Activated T-helper 1 cell treated with anti-CD3 and anti-CD28 coated beads, Interleukin-12 subunit alpha, Interleukin-12 subunit beta, Interleukin-2, Interleukin-4 antibody, amounts not matched to agents 30 ng/mL and 10 ng/mL and 1 ng/mL, durations not matched to agents 14 hours and 24 hours and 36 hours (primary cell): ENCODE measurements at regions of chr3 and their contacts with region 1.

Region 1: GRCh38 chr3:113223475-113224281 is 12.3 kb downstream of the BOC start:
- DNase-seq: peak; percentile 32
- H3K4me3 Mint-ChIP-seq: peak overlapping the region; percentile 52
- H3K27ac Mint-ChIP-seq: no peak overlapping the region
- H3K4me1 Mint-ChIP-seq: peaks cover 18% of the 10 kb centered on the region
- H3K27me3 Mint-ChIP-seq: peaks cover 13% of the 10 kb centered on the region

Region 2: DNA sequence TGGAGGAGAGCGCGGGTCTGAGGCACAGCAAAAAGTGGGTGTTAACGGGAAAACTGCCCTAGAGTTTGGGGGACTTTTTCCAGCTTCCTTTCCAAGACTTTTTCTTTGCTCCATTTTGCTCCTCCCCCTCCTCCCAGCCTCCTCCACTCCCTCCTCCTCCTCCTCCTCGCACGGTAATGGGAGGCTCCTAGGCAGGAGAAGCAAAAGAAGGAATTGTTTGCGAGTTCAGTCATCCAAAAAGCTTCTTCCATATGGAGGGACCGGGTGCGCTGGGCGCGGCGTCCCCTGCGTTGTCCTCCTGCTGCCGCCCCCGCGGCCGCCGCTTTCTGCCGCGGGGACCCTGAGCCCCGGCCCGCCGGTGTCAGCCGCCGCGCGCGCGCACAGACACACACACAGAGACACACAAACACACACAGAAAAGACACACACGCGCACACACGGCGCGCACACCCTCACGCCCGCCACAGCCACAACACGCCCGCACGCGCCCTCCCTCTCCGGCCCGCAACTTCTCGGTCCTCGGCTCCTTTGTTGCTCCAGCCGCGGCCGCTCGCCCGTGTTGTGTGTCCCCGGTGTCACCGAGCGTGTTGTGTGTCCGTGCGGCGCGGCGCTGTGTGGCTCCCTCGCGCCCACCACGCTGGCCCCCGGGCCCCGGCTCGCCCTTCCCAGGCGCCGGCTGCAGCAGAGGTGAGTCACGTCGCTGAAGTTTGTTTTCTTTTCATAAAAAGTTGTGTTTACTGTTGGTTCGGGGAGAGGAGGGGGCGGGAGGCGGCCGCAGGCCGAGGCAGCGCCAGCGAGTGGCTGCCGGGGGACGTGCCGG is 12.1 kb before region 1 on chr3 and contains the start of gene BOC:
- intact Hi-C with region 1: loop called (anchors 1 kb)
- DNase-seq: no peak
- H3K4me3 Mint-ChIP-seq: peak within 1 kb of the TSS; percentile 83
- H3K27ac Mint-ChIP-seq: no peak within 1 kb of the TSS
- H3K4me1 Mint-ChIP-seq: peaks cover 15% of the 10 kb centered on the region
- H3K27me3 Mint-ChIP-seq: peaks cover 73% of the 10 kb centered on the region
- total RNA-seq, gene BOC: 2.1 and 3.3 TPM in 2 replicates